ENCODE measurements at regions of chr10 and their contacts with region 1.

Region 1: DNA sequence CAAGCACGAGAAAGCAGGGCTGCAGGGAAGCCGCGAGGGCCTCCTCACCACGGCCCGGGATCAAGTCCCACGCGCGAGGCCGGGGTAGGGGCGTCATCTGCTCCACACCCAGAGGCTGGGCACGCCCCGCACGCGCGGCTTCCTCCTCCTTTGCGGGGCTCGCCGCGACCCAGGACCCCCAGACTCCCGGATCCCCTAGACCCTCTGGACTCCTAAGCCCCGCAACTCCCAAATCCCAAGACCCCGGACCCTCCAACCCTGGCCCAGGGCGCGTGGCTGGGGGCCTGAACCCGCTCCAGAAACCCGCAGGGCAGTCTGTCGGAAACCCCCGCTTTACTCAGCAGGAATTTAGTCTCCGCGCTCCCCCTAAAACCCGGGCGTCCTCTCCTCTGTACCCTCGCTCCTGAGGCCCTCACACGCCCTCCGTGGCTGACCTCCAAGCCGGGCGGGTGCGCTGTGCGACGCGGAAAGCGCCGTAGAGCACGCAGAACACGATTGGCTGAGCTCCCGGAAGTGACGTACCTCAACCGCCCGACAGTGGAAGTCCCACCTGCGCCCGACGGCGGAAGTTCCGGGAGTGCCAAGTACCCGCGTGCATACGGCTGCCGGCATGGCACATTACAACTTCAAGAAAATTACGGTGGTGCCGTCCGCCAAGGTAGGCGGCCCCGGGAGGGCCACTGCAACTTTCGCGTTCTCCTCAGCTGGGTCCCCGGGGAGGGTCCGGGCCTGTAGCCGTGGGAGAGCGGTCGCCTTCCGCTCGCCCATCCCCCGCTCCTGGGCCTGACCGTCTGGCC is at the start of gene GTPBP4:
- DNase-seq: peak; percentile 100
- H3K4me3 ChIP-seq: peak within 1 kb of the TSS; percentile 70 to 92 (median 89)
- H3K27ac ChIP-seq: peak within 1 kb of the TSS; percentile 90 to 95 (median 92)
- H3K4me1 ChIP-seq: peaks cover 18 to 35% (median 30%) of the 10 kb centered on the region in 4 donors
- H3K27me3 ChIP-seq: no peaks in the 10 kb centered on the region
- CTCF ChIP-seq: peak in 1 of 3 experiments; percentile 32
- EP300 ChIP-seq: no peak
- POLR2A ChIP-seq: peak; percentile 61
- total RNA-seq, gene GTPBP4: 18.3 to 39.1 (median 27.4) TPM

Region 2: DNA sequence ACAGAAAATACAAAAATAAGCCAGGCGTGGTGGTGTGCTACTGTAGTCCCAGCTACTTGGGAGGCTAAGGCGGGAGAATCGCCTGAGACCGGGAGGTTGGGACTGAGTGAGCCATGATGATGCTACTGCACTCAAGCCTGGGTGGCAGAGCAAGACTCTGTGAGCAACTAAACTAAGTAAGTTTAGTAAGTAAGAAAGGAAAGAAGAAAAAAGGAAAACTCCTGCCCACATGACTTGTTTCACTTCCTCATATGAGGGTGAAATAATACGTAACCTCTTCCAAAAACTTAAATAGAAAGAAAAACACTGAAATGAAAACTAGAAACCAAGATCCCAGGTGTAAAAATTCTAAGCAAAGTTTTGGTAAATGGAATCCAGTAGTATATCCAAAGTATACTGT is 136.2 kb before region 1 on chr10:
- intact Hi-C with region 1: no loop called
- DNase-seq: no peak
- H3K4me3 ChIP-seq: no peak overlapping the region
- H3K27ac ChIP-seq: no peak overlapping the region
- H3K4me1 ChIP-seq: peaks cover 2 to 16% (median 10%) of the 10 kb centered on the region in 4 donors
- H3K27me3 ChIP-seq: no peaks in the 10 kb centered on the region
- CTCF ChIP-seq: no peak
- EP300 ChIP-seq: no peak
- POLR2A ChIP-seq: no peak

Region 3: GRCh38 chr10:1056326-1057105 is 68.4 kb after region 1 on chr10 and contains the start of gene WDR37:
- intact Hi-C with region 1: loop called (anchors 2 kb)
- DNase-seq: no peak
- H3K4me3 ChIP-seq: peak within 1 kb of the TSS; percentile 94 to 97 (median 95)
- H3K27ac ChIP-seq: peak within 1 kb of the TSS; percentile 99 to 100 (median 99)
- H3K4me1 ChIP-seq: peaks cover 31 to 57% (median 45%) of the 10 kb centered on the region in 4 donors
- H3K27me3 ChIP-seq: no peaks in the 10 kb centered on the region
- CTCF ChIP-seq: no peak
- EP300 ChIP-seq: no peak
- POLR2A ChIP-seq: peak; percentile 81
- total RNA-seq, gene WDR37: 9.1 to 17.2 (median 13.2) TPM

Region 4: DNA sequence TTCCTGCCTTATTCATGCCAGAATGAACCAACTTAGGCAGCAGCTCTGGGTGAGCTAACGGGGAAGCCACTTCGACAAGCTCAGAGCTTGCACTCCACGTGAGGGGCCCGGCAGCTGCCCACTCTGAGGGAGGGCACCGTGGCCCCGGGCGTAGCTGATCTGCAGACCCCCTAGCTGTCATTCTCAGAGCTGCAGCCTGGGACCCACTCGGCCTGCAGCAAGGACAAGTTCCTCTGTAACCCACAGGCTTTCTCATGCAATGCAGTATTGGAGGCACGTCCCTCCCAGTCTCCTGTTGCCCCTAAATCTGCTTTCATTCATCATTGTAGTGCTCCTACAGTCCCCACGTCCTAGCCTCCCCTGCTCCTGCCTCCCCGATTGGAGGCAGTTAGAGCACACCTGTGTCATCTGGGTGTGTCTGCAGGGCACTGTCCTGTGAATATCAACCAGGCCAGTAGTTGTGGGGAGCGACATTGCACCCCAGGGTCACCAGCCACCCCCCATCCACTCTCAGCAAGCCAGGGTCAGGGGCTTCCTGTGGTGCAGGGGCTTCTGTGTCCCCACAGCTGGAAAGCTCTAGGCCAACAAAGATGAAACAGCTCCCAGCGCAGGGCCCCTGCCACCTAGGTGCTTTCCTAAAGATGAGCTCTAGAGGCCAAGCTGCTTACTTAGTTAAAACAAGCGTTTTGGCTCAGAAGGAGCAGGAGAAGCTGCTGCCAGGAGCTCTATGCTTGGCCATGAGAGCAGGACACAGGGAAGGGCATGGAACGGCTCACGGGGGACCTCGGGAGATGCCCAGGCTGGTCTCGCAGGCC is 415.6 kb after region 1 on chr10:
- intact Hi-C with region 1: no loop called
- DNase-seq: peak; percentile 82
- H3K4me3 ChIP-seq: no peak overlapping the region
- H3K27ac ChIP-seq: no peak overlapping the region
- H3K4me1 ChIP-seq: no peaks in the 10 kb centered on the region
- H3K27me3 ChIP-seq: peaks cover 0 to 72% (median 0%) of the 10 kb centered on the region in 4 donors
- CTCF ChIP-seq: no peak
- EP300 ChIP-seq: no peak
- POLR2A ChIP-seq: no peak

Measured in esophagus muscularis mucosa (tissue), 4 donors.